GM10248 (cell line): ENCODE measurements at regions of chr7 and their contacts with region 1.

Region 1: DNA sequence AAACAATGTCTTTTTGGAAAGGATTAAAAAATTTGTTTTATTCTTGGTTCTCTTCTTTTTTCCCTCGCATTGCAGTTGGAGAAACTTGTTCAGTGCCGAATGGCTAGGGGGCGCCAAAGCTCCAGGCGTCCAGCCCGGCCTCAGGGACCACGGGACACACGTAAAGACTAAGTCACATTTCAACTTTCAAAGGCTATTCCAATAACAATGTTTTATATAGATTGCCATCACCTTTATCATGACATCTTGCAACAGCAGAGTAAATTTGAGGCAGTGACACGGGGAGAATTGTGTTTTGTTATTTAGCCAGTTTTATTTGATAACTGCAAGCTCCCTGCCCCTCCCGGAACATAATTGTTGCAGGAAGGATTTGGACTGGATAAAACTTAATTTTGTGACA is 2.2 kb upstream of the IGFBP3 start:
- DNase-seq: peak; percentile 50
- CTCF ChIP-seq: peak; percentile 89

Region 2: GRCh38 chr7:45872116-45873034 is 50.9 kb before region 1 on chr7:
- CTCF ChIA-PET with region 1: no interaction called
- POLR2A ChIA-PET with region 1: no interaction called
- DNase-seq: no peak
- CTCF ChIP-seq: peak; percentile 54

Region 3: GRCh38 chr7:45938626-45939302 is 15.5 kb after region 1 on chr7:
- CTCF ChIA-PET with region 1: interaction called, 20 read pairs
- POLR2A ChIA-PET with region 1: no interaction called
- DNase-seq: no peak
- CTCF ChIP-seq: no peak

Region 4: DNA sequence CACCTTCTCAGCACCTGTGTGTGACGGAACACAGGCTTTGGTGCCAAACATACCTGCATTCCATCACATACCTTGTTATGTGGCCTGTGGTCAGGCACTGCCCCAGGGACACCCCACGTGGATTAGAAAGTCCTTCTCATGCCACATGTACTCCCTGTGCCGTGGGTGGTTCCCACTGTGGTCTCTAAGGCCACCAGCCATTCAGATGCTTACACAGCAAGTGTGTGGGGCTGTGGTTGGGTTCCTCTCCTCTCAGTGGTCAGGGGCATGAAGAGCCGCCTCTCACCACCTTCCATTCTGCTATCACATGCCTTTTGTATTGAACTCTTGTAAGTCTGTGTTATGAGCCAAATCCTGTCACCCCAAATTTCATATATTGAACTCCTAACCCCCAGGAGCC is 82.9 kb after region 1 on chr7:
- CTCF ChIA-PET with region 1: no interaction called
- POLR2A ChIA-PET with region 1: no interaction called
- DNase-seq: no peak
- CTCF ChIP-seq: no peak

Region 5: GRCh38 chr7:46145412-46145811 is 222.1 kb after region 1 on chr7:
- CTCF ChIA-PET with region 1: no interaction called
- POLR2A ChIA-PET with region 1: no interaction called
- DNase-seq: no peak
- CTCF ChIP-seq: no peak

Region 6: GRCh38 chr7:46352004-46352954 is 429.0 kb after region 1 on chr7:
- CTCF ChIA-PET with region 1: interaction called, 17 read pairs
- POLR2A ChIA-PET with region 1: no interaction called
- DNase-seq: peak; percentile 43
- CTCF ChIP-seq: peak; percentile 55